CD14-positive monocyte (primary cell): ENCODE measurements at regions of chr11 and their contacts with region 1.

Region 1: GRCh38 chr11:18634140-18635032 is at the start of gene SPTY2D1:
- DNase-seq: peak; percentile 99 to 100 (median 99)
- H3K4me3 ChIP-seq: peak within 1 kb of the TSS; percentile 65 to 85 (median 70)
- H3K4me3 Mint-ChIP-seq: peak within 1 kb of the TSS; percentile 94 to 97
- H3K27ac ChIP-seq: peak within 1 kb of the TSS; percentile 92 to 96
- H3K27ac Mint-ChIP-seq: peak within 1 kb of the TSS; percentile 99 to 100 (median 100)
- H3K4me1 ChIP-seq: peaks cover 15 to 19% of the 10 kb centered on the region in 2 donors
- H3K4me1 Mint-ChIP-seq: peaks cover 18% of the 10 kb centered on the region
- H3K27me3 ChIP-seq: no peaks in the 10 kb centered on the region
- H3K27me3 Mint-ChIP-seq: peaks cover 3 to 14% (median 7%) of the 10 kb centered on the region in 3 donors
- CTCF ChIP-seq: no peak
- polyA plus RNA-seq, gene SPTY2D1: 8.4 to 14.9 (median 11.8) TPM

Region 2: GRCh38 chr11:18321980-18322711 is 312.2 kb before region 1 on chr11 and contains the starts of genes GTF2H1 and HPS5:
- intact Hi-C with region 1: loop called in 1 of 2 experiments (anchors 10 kb)
- DNase-seq: peak; percentile 98 to 99 (median 99)
- H3K4me3 ChIP-seq: peak within 1 kb of the TSS; percentile 58 to 82 (median 82)
- H3K4me3 Mint-ChIP-seq: peak within 1 kb of the TSS; percentile 95 to 97
- H3K27ac ChIP-seq: peak within 1 kb of the TSS; percentile 93 to 94
- H3K27ac Mint-ChIP-seq: peak within 1 kb of the TSS; percentile 99 to 100 (median 100)
- H3K4me1 ChIP-seq: peaks cover 35 to 50% of the 10 kb centered on the region in 2 donors
- H3K4me1 Mint-ChIP-seq: peaks cover 60% of the 10 kb centered on the region
- H3K27me3 ChIP-seq: no peaks in the 10 kb centered on the region
- H3K27me3 Mint-ChIP-seq: no peaks in the 10 kb centered on the region
- CTCF ChIP-seq: no peak
- polyA plus RNA-seq, gene GTF2H1: 23.0 to 26.6 (median 26.2) TPM
- polyA plus RNA-seq, gene HPS5: 11.4 to 17.7 (median 12.9) TPM

Region 3: GRCh38 chr11:18526521-18527296 is 107.7 kb before region 1 on chr11 and contains the start of gene TSG101:
- intact Hi-C with region 1: loop called (anchors 5 kb)
- DNase-seq: peak; percentile 90 to 97 (median 96)
- H3K4me3 ChIP-seq: peak within 1 kb of the TSS; percentile 68 to 95 (median 89)
- H3K4me3 Mint-ChIP-seq: peak within 1 kb of the TSS; percentile 94 to 99
- H3K27ac ChIP-seq: peak within 1 kb of the TSS; percentile 99 to 100
- H3K27ac Mint-ChIP-seq: peak within 1 kb of the TSS; percentile 100
- H3K4me1 ChIP-seq: peaks cover 14 to 19% of the 10 kb centered on the region in 2 donors
- H3K4me1 Mint-ChIP-seq: peaks cover 18% of the 10 kb centered on the region
- H3K27me3 ChIP-seq: no peaks in the 10 kb centered on the region
- H3K27me3 Mint-ChIP-seq: no peaks in the 10 kb centered on the region
- CTCF ChIP-seq: no peak
- polyA plus RNA-seq, gene TSG101: 76.7 to 116 (median 112) TPM

Region 4: GRCh38 chr11:18588297-18589252 is 45.8 kb before region 1 on chr11 and contains the start of gene UEVLD:
- intact Hi-C with region 1: loop called in 1 of 2 experiments (anchors 5 kb)
- DNase-seq: peak; percentile 56 to 92 (median 65)
- H3K4me3 ChIP-seq: peak within 1 kb of the TSS; percentile 81 to 92 (median 90)
- H3K4me3 Mint-ChIP-seq: no peak within 1 kb of the TSS
- H3K27ac ChIP-seq: peak within 1 kb of the TSS; percentile 10 to 85
- H3K27ac Mint-ChIP-seq: no peak within 1 kb of the TSS
- H3K4me1 ChIP-seq: peaks cover 21 to 22% of the 10 kb centered on the region in 2 donors
- H3K4me1 Mint-ChIP-seq: peaks cover 7% of the 10 kb centered on the region
- H3K27me3 ChIP-seq: no peaks in the 10 kb centered on the region
- H3K27me3 Mint-ChIP-seq: no peaks in the 10 kb centered on the region
- CTCF ChIP-seq: no peak
- polyA plus RNA-seq, gene UEVLD: 8.0 to 15.5 (median 11.7) TPM

Region 5: GRCh38 chr11:18698341-18699268 is 64.2 kb after region 1 on chr11 and contains the start of gene TMEM86A:
- intact Hi-C with region 1: loop called (anchors 5 to 10 kb)
- DNase-seq: peak; percentile 88 to 90 (median 89)
- H3K4me3 ChIP-seq: peak within 1 kb of the TSS; percentile 42 to 79 (median 75)
- H3K4me3 Mint-ChIP-seq: peak within 1 kb of the TSS; percentile 79 to 87
- H3K27ac ChIP-seq: peak within 1 kb of the TSS; percentile 31 to 77
- H3K27ac Mint-ChIP-seq: peak within 1 kb of the TSS; percentile 91 to 94 (median 93)
- H3K4me1 ChIP-seq: peaks cover 35 to 40% of the 10 kb centered on the region in 2 donors
- H3K4me1 Mint-ChIP-seq: peaks cover 34% of the 10 kb centered on the region
- H3K27me3 ChIP-seq: no peaks in the 10 kb centered on the region
- H3K27me3 Mint-ChIP-seq: peaks cover 4 to 12% (median 5%) of the 10 kb centered on the region in 3 donors
- CTCF ChIP-seq: no peak
- polyA plus RNA-seq, gene TMEM86A: 1.3 to 4.3 (median 3.5) TPM